ENCODE measurements at regions of chr7 and their contacts with region 1.

Region 1: GRCh38 chr7:148884299-148885022 is 370 bp upstream of the EZH2 start:
- DNase-seq: peak; percentile 96
- H3K4me3 ChIP-seq: peak overlapping the region; percentile 74 to 97 (median 78)
- H3K27ac ChIP-seq: peak overlapping the region; percentile 91 to 95 (median 93)
- H3K4me1 ChIP-seq: peaks cover 0 to 11% (median 7%) of the 10 kb centered on the region in 4 donors
- H3K27me3 ChIP-seq: peaks cover 0 to 30% (median 10%) of the 10 kb centered on the region in 3 donors
- CTCF ChIP-seq: no peak
- EP300 ChIP-seq: no peak
- POLR2A ChIP-seq: peak in 1 of 2 donors; percentile 27

Region 2: DNA sequence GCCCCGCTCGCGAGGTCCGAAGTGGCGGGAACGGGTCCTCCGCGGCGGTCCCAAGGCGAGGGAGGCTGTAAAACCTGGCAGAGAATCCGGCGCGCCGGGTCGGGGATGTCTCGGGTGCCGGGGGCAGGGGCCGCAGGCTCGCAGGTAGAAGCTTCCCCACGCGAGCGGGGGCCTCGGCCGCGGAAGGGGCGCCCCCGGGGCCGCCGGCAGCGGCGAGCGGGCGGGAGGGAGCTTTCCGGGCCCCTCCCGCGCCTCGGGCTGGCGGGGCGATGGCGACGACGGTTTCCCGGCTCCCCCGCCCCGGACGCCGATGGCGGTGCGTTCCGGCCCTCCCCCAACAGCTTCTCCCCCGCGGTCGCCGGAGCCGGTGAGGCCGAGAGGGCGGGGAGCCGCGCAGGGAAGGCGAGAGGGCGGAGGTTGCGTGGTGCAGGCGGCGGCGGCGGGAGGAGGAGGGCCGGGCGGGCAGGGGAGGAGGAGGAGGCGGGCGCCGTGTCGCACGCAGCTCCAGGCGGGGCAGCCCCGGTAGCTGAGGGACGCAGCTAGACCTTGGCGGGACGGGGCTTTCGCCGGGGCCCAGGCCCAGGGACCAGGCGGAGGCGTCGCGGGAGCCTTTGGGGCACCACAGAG is 186.0 kb before region 1 on chr7 and contains the start of gene CUL1:
- intact Hi-C with region 1: loop called (anchors 2 kb)
- DNase-seq: peak; percentile 93
- H3K4me3 ChIP-seq: peak within 1 kb of the TSS; percentile 60 to 95 (median 80)
- H3K27ac ChIP-seq: peak within 1 kb of the TSS; percentile 96 to 98 (median 96)
- H3K4me1 ChIP-seq: peaks cover 0 to 42% (median 34%) of the 10 kb centered on the region in 4 donors
- H3K27me3 ChIP-seq: no peaks in the 10 kb centered on the region
- CTCF ChIP-seq: no peak
- EP300 ChIP-seq: no peak
- POLR2A ChIP-seq: peak; percentile 39 to 80
- total RNA-seq, gene CUL1: 53.9 to 72.8 (median 65.3) TPM

Region 3: DNA sequence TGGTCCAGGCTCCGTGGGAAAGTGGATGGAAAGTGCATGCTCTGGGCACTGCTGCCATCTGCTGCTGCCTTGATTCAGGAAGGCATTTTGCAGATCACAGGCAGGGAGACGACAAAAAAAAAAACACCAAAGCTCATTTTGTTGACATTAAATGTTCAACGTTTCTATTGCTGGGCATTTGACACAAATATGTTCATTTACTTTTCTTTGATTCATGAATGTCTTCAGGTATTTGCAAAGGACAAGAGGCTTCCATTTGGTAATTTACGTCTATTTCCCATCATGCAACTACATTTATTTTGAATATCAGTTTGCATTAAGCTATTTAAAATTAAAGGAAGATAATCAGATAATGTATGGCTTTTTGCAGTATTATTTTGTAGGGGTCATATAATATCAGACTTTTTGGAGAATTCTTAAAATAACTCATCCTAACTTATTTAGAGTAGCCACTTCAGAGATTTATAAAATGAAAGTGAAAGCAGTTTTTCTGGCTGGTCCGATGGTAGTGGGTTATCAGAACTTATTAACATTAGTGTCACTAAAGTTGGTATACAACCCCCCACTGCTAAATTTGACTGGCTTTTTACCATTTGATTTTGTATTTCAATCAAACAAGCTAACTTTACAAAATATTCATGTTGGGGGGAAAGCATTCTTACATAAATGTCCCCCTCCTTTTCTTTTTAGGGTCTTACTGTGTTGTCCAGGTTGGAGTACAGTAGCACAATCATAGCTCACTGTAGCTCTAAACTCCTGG is 78.5 kb after region 1 on chr7:
- intact Hi-C with region 1: loop called (anchors 5 kb)
- DNase-seq: peak; percentile 82
- H3K4me3 ChIP-seq: peak overlapping the region; percentile 39 to 60 (median 53)
- H3K27ac ChIP-seq: peak overlapping the region; percentile 60 to 75 (median 71)
- H3K4me1 ChIP-seq: peaks cover 0 to 18% (median 14%) of the 10 kb centered on the region in 4 donors
- H3K27me3 ChIP-seq: no peaks in the 10 kb centered on the region
- CTCF ChIP-seq: peak in 3 of 4 experiments; percentile 34 to 71 (median 48)
- EP300 ChIP-seq: no peak
- POLR2A ChIP-seq: no peak

Region 4: DNA sequence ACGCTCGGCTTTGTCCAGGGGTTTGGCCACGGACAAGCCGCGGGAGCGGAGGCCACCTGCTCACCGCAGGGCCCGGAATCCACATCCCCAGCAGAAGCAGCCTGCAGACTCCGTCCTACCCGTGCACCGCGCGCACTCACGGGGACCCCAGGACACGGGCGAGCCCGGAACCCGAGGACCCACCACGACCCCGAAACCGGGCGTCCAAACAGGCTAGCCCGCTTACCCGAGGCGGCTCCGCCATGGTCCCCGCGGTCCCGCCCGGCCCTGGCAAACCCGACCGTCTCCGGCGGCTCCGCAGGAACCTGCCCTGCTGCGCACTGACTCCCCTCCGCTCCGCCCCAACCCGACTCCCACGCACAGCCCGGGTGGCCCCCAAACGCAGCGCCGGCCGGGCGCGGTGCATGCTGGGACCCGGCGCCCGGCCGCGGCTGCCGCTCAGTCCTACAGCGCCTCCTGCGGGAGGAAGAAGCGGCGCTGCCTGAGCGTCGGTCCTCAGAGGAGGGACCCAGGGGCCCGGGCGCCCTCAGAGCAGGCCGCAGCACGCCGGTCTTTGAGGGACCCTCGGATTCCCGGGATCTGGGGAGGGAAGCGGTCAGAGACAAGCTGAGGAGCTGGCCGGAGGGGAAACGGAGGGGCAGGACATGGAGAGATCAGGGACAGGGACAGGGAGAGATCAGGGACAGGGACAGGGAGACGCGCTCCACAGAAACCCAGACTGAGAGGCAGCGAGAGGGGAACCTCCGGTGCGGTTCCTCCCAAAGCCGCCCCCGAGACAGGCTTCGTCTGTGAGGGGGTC is 206.1 kb after region 1 on chr7 and contains the start of gene ZNF786:
- intact Hi-C with region 1: loop called (anchors 5 kb)
- DNase-seq: peak; percentile 93
- H3K4me3 ChIP-seq: peak within 1 kb of the TSS; percentile 95 to 99 (median 96)
- H3K27ac ChIP-seq: peak within 1 kb of the TSS; percentile 92 to 99 (median 96)
- H3K4me1 ChIP-seq: peaks cover 0 to 17% (median 9%) of the 10 kb centered on the region in 4 donors
- H3K27me3 ChIP-seq: no peaks in the 10 kb centered on the region
- CTCF ChIP-seq: peak; percentile 84 to 93 (median 91)
- EP300 ChIP-seq: no peak
- POLR2A ChIP-seq: peak; percentile 88 to 91
- total RNA-seq, gene ZNF786: 3.0 to 6.9 (median 3.9) TPM

Region 5: GRCh38 chr7:149147072-149147751 is 262.8 kb after region 1 on chr7 and contains the start of gene ZNF398:
- intact Hi-C with region 1: loop called (anchors 5 kb)
- DNase-seq: peak; percentile 77
- H3K4me3 ChIP-seq: peak within 1 kb of the TSS; percentile 72 to 92 (median 84)
- H3K27ac ChIP-seq: peak within 1 kb of the TSS; percentile 89 to 94 (median 92)
- H3K4me1 ChIP-seq: peaks cover 0 to 31% (median 21%) of the 10 kb centered on the region in 4 donors
- H3K27me3 ChIP-seq: no peaks in the 10 kb centered on the region
- CTCF ChIP-seq: peak; percentile 21 to 84 (median 31)
- EP300 ChIP-seq: no peak
- POLR2A ChIP-seq: no peak
- total RNA-seq, gene ZNF398: 13.0 to 19.7 (median 18.4) TPM

Measured in sigmoid colon (tissue), 7 donors.